ENCODE measurements at regions of chr11 and their contacts with region 1.

Region 1: DNA sequence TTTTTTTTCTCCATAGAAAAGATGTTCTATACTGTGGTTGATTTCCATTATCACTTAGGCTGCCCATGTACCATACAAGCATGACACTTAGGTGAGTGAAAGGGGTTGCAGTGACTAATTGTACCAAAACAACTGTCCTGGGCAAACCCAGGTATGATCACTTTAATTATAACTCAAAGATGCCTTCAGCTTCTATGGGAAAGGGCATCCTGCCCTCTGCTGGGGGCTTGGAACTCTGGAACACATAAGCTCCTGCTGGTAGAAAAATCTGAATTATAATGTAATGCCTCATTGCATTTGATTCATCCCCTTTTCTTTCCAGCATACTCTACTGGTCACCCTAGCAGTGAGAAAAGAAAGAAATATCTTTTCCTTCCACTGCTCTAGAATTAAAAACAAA is 206.3 kb downstream of the DDX10 start:
- DNase-seq: peak; percentile 32
- ATAC-seq: peak; percentile 83
- H3K4me3 Mint-ChIP-seq: no peak overlapping the region
- H3K27ac Mint-ChIP-seq: peak overlapping the region; percentile 67; the same call in 1 of the 2 replicates
- H3K4me1 Mint-ChIP-seq: peaks cover 55% of the 10 kb centered on the region
- H3K27me3 Mint-ChIP-seq: no peaks in the 10 kb centered on the region
- CTCF ChIP-seq: peak; percentile 39

Region 2: DNA sequence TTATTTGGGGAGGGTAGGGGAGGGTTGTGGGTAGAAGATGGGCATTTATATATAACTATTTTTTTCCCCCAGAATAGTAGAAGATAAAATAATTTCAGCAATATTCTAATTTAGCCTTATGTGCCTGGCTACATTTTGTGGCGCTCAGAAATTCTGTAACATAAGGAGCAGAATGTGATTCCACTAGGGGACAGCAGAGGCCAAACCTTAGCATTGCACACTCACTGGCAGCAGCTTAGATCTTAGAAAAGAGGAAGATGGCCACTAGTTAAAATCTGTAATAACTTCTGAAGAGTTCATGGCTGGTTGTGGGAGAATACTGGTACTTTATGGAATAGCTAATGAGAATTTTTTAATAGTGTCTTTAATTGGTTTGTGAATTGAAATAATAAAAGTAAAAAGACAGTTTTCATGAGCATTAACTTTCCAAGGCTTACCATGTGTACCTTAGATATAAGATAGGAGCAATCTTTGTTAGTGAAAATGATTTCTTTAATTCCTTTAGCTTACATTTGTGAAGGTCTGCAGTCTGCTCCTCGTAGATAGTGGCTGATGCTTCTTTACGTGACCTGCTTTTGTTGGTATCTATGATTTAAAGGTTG is 173.2 kb before region 1 on chr11:
- CTCF ChIA-PET with region 1: interaction called, 31 read pairs
- POLR2A ChIA-PET with region 1: no interaction called
- DNase-seq: peak; percentile 27
- ATAC-seq: peak; percentile 81
- H3K4me3 Mint-ChIP-seq: no peak overlapping the region
- H3K27ac Mint-ChIP-seq: no peak overlapping the region
- H3K4me1 Mint-ChIP-seq: no peaks in the 10 kb centered on the region
- H3K27me3 Mint-ChIP-seq: no peaks in the 10 kb centered on the region
- CTCF ChIP-seq: peak; percentile 42; the same call in 1 of the 2 replicates

Region 3: DNA sequence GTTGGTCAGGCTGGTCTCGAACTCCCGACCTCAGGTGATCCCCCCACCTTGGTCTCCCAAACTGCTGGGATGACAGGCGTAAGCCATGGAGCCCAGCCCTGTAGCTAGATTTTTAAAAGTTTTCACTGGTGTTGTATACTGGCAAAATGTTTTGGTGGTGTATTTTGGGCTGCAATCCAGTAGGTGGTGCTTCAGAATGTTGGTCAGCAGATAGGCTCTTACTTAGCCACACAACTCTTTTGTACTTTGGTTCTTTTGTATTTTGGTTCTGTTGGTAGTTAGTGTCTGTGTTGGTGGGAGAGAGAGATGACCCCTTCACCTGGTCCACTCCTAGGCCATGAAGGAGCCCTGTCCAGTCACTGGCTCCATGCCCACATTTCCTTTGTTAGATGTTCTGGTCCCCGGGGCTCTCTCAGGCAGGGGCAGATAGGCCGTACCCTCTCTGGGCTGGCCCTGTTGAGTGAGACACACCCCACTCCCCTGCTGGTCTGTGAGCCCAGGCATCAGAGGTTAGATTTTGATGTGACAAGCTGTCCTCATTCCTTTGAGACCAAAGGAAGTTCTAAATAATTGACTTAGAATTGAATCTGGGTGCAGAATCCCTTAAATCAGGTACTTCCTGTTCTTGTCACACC is 82.5 kb before region 1 on chr11:
- CTCF ChIA-PET with region 1: interaction called, 16 read pairs
- POLR2A ChIA-PET with region 1: no interaction called
- DNase-seq: peak; percentile 24
- ATAC-seq: peak; percentile 92
- H3K4me3 Mint-ChIP-seq: no peak overlapping the region
- H3K27ac Mint-ChIP-seq: peak overlapping the region; percentile 38; the same call in 1 of the 2 replicates
- H3K4me1 Mint-ChIP-seq: peaks cover 59% of the 10 kb centered on the region
- H3K27me3 Mint-ChIP-seq: no peaks in the 10 kb centered on the region
- CTCF ChIP-seq: no peak; the same call in 1 of the 2 replicates

Region 4: GRCh38 chr11:108853864-108854263 is 17.3 kb before region 1 on chr11:
- CTCF ChIA-PET with region 1: interaction called, 11 read pairs
- POLR2A ChIA-PET with region 1: no interaction called
- DNase-seq: no peak
- ATAC-seq: peak; percentile 60
- H3K4me3 Mint-ChIP-seq: no peak overlapping the region
- H3K27ac Mint-ChIP-seq: peak overlapping the region; percentile 38; the same call in 1 of the 2 replicates
- H3K4me1 Mint-ChIP-seq: peaks cover 3% of the 10 kb centered on the region
- H3K27me3 Mint-ChIP-seq: no peaks in the 10 kb centered on the region
- CTCF ChIP-seq: no peak

Region 5: DNA sequence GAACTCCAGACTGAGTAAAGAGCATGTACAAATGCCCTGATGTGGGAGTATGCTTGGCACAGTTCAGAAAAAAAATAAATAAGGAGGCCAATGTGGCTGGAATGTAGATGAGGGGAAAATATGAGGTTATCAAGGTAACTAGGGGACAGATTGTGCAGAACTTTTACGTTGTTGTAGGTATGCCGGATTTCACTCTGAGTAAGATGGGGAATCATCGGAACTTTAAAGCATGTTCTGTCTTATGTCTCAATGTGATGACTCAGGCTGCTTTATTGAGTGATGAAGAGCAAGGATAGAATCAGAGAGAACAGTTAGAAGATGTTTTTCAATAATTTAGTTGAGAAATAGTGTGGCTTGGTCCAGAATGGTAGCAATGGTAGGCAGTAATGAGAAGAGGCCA is 681.2 kb after region 1 on chr11:
- CTCF ChIA-PET with region 1: no interaction called
- POLR2A ChIA-PET with region 1: no interaction called
- DNase-seq: no peak
- ATAC-seq: no peak
- H3K4me3 Mint-ChIP-seq: no peak overlapping the region
- H3K27ac Mint-ChIP-seq: no peak overlapping the region
- H3K4me1 Mint-ChIP-seq: no peaks in the 10 kb centered on the region
- H3K27me3 Mint-ChIP-seq: no peaks in the 10 kb centered on the region
- CTCF ChIP-seq: no peak